ENCODE measurements at regions of chr4 and their contacts with region 1.

Region 1: DNA sequence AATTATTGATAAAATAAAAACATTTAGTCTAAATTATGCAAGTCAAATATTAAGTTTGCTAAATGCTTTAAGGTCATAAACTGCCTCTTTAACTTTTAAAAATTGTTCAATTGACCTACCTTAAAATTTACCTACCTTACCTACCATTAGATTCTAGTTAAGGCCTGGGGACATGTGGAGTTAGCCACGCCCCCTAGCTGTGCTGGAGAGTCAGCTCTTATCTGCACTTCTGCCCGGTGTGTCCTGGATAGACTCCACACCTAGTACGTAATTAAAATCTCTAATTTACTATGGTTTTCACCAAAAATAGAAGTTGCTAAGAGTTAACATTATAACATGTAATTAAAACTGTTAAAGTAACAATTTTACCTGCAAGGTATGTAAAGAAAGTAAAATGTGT is 22.7 kb downstream of the TENM3 start:
- DNase-seq: no peak
- H3K4me3 ChIP-seq: no peak overlapping the region
- CTCF ChIP-seq: no peak

Region 2: DNA sequence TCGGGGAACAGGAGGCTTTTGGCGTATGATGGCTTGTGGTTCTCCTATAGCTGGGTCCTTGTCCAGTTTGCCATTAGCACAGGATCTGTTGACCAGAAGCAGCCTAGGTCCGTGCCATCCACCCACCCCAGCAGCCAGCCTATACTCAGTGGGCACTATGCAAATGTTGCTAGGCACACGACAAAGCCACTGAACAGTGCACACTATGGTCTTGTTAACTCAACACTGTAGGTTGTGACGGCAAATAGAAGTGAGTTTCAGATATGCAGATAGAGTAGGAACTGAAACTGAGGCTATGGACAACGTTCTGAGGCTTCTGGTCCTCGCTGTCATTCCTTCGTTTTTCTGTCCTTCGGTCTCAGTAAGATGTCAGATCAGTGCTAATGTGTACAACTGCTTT is 564.0 kb before region 1 on chr4:
- in situ Hi-C with region 1: no loop called
- DNase-seq: no peak
- H3K4me3 ChIP-seq: no peak overlapping the region
- CTCF ChIP-seq: no peak

Region 3: DNA sequence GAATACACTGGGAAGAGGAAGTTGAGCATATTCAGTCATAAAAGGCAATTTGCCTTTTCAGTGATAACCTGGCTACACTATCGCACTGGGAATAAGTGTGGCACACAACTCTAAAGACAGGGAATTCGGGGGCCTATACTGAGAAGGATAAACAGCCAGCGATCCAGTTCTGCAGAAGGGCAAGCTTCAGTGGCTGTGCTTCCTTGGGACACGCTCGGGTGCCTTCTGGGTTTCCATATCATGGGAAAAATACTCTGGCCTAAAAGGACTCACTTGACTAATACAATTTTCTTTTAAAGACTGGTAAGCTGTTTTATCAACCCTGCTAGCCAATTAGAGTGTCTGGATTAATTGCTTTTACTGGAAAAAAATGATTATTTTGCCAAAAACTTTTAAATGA is 35.9 kb after region 1 on chr4:
- in situ Hi-C with region 1: loop called (anchors 5 kb)
- DNase-seq: no peak
- H3K4me3 ChIP-seq: no peak overlapping the region
- CTCF ChIP-seq: no peak

Measured in astrocyte of the cerebellum (primary cell).